ENCODE measurements at regions of chr6 and their contacts with region 1.

Region 1: DNA sequence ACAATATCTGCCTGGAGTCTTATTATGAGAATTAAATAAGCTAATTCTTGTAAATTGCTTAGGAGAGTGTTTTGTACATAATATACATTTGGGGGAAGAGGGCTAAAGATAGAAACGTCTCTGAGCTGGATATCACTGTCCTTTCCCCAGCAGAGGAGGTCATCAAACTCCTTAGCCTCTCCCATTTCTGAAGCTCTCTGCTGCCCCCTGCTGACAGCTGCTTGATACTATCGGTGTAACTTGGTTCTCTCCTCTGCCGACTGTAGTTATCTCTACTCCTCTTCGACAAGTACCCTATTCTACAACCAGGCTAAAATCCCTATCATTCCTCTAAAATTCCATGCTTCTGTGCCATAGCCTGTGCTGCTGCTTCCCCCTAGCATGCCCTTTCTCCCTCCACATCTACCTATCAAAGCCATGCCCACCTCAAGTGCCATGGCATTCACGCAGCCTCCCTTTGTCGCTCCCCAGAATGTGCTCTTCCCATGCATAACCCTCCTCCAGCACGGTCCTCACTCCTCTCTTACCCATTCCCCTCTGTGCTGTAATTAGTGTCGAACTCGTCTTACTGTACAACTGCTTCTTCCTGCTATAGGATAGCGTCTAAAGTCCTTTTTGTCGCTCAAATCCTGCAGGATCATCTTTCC is 101.2 kb downstream of the EPM2A start:
- DNase-seq: peak; percentile 91
- H3K4me3 ChIP-seq: no peak overlapping the region
- H3K27ac ChIP-seq: no peak overlapping the region
- H3K4me1 ChIP-seq: peaks cover 39% of the 10 kb centered on the region
- H3K27me3 ChIP-seq: no peaks in the 10 kb centered on the region
- CTCF ChIP-seq: peak; percentile 90

Region 2: GRCh38 chr6:145028144-145028818 is 605.8 kb before region 1 on chr6:
- CTCF ChIA-PET with region 1: no interaction called
- POLR2A ChIA-PET with region 1: no interaction called
- intact Hi-C with region 1: loop called (anchors 5 kb)
- DNase-seq: peak; percentile 86
- H3K4me3 ChIP-seq: no peak overlapping the region
- H3K27ac ChIP-seq: peak overlapping the region; percentile 61
- H3K4me1 ChIP-seq: peaks cover 51% of the 10 kb centered on the region
- H3K27me3 ChIP-seq: no peaks in the 10 kb centered on the region
- CTCF ChIP-seq: peak; percentile 80

Region 3: DNA sequence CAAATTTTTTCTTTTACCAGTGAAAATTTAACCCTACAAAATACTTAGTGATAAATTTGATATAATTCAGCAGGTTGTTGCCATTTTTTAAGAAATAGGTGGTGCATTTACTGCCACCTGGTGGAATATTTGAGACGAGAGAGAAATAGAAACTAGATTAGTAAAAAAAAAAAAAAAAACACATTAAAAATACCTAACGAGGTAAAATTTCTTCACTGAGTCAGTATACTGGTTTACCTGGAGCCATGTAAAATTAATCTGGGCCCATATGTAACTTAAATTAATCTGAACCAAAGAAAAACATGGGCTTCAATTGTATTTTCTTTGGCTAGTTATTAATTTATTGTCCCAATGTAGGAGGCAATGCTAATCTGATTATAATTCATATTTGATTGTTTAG is 419.5 kb before region 1 on chr6:
- CTCF ChIA-PET with region 1: no interaction called
- POLR2A ChIA-PET with region 1: no interaction called
- intact Hi-C with region 1: loop called (anchors 2 kb)
- DNase-seq: peak; percentile 72
- H3K4me3 ChIP-seq: no peak overlapping the region
- H3K27ac ChIP-seq: peak overlapping the region; percentile 60
- H3K4me1 ChIP-seq: peaks cover 17% of the 10 kb centered on the region
- H3K27me3 ChIP-seq: no peaks in the 10 kb centered on the region
- CTCF ChIP-seq: peak; percentile 78

Region 4: GRCh38 chr6:145704143-145704781 is 70.2 kb after region 1 on chr6:
- CTCF ChIA-PET with region 1: interaction called, 3 read pairs
- POLR2A ChIA-PET with region 1: no interaction called
- intact Hi-C with region 1: loop called (anchors 5 kb)
- DNase-seq: peak; percentile 54
- H3K4me3 ChIP-seq: no peak overlapping the region
- H3K27ac ChIP-seq: no peak overlapping the region
- H3K4me1 ChIP-seq: peaks cover 14% of the 10 kb centered on the region
- H3K27me3 ChIP-seq: no peaks in the 10 kb centered on the region
- CTCF ChIP-seq: peak; percentile 69

Region 5: GRCh38 chr6:145887969-145888368 is 253.9 kb after region 1 on chr6:
- CTCF ChIA-PET with region 1: interaction called, 4 read pairs
- POLR2A ChIA-PET with region 1: no interaction called
- intact Hi-C with region 1: loop called (anchors 5 kb)
- DNase-seq: peak; percentile 50
- H3K4me3 ChIP-seq: no peak overlapping the region
- H3K27ac ChIP-seq: no peak overlapping the region
- H3K4me1 ChIP-seq: no peaks in the 10 kb centered on the region
- H3K27me3 ChIP-seq: no peaks in the 10 kb centered on the region
- CTCF ChIP-seq: peak; percentile 70

Measured in A673 (cell line).